Prostate gland (tissue), 2 donors: ENCODE measurements at regions of chr2 and their contacts with region 1.

Region 1: DNA sequence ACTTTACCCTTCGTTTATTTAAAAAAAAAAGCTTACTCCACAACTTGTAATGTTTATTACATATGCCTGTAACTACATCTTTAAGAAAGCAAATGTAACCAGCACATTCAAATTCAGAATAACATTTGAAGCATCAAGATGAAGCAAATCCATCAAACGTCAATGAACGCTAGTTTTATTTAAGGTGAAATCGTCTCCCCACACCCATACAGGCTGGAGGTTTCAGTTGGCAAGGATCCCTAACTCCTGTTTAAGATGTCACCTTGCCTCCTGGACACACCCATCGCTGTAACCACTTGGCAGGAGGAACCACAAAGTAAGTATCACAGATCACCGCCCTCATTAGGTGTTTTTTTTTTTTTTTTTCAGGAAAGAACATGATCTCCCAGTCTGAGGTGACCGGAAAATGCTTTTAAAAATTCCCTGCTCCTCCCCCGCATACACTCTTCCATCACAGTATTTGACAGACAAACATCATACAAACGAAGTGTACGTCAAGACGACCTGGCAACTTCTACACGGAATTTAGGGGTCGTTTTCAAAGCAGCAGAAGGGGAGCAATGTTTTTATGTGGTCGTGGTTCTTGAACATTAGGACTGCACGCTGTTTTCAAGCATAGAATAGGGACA is 19.7 kb upstream of the STPG4 start:
- DNase-seq: peak; percentile 82
- H3K4me3 ChIP-seq: peak overlapping the region; percentile 81 to 96
- H3K27ac ChIP-seq: peak overlapping the region; percentile 92 to 97
- H3K4me1 ChIP-seq: peaks cover 7% of the 10 kb centered on the region
- H3K27me3 ChIP-seq: no peaks in the 10 kb centered on the region
- CTCF ChIP-seq: no peak
- POLR2A ChIP-seq: no peak

Region 2: GRCh38 chr2:47070920-47071824 is 103.7 kb before region 1 on chr2:
- intact Hi-C with region 1: loop called (anchors 5 kb)
- DNase-seq: peak; percentile 27
- H3K4me3 ChIP-seq: no peak overlapping the region
- H3K27ac ChIP-seq: peak overlapping the region; percentile 23 to 76
- H3K4me1 ChIP-seq: peaks cover 20% of the 10 kb centered on the region
- H3K27me3 ChIP-seq: no peaks in the 10 kb centered on the region
- CTCF ChIP-seq: no peak
- POLR2A ChIP-seq: no peak